ENCODE measurements at regions of chr12 and their contacts with region 1.

Region 1: GRCh38 chr12:88132390-88132789 is 9.5 kb downstream of the CEP290 start:
- H3K4me3 ChIP-seq: no peak overlapping the region
- H3K27ac ChIP-seq: no peak overlapping the region
- H3K4me1 ChIP-seq: no peaks in the 10 kb centered on the region
- CTCF ChIP-seq: no peak

Region 2: DNA sequence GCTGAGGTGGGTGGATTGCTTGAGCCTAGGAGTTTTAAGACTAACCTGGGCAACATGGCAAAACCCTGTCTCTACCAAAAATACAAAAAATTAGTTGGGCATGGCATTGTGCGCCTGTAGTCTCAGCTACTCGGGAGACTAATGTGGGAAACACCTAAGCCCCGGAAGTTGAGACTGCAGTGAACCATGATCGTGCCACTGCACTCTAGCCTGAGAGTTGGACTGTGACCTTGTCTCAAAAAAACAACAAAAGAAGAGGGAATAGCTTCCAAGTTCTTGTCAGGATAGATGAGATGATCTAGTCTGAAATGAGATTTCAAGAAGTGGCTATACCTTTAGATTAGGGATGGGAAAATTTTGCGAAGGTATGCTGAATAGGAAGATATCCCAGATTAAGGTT is 88.4 kb before region 1 on chr12:
- CTCF ChIA-PET with region 1: no interaction called
- POLR2A ChIA-PET with region 1: interaction called, 11 read pairs
- H3K4me3 ChIP-seq: no peak overlapping the region
- H3K27ac ChIP-seq: no peak overlapping the region
- H3K4me1 ChIP-seq: no peaks in the 10 kb centered on the region
- CTCF ChIP-seq: no peak

Region 3: DNA sequence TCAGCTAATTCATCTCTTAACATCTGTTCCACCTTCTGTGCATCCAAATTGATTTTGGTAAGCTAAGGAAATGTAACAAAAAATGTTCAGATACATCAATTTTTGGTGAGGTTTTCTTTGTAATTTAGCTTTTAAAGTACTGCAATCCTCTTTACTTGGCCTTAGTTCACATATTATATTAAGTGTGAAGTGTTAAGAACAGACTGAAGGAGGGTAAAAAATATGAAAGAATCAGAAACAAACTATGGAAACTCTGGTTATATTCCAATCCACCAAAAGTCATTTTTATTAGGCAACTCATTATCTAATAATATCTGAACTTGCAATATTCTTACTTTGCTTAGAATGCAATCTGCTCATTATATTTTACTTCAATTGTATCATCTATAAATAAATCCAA is 39.6 kb before region 1 on chr12:
- CTCF ChIA-PET with region 1: no interaction called
- POLR2A ChIA-PET with region 1: no interaction called
- H3K4me3 ChIP-seq: no peak overlapping the region
- H3K27ac ChIP-seq: no peak overlapping the region
- H3K4me1 ChIP-seq: no peaks in the 10 kb centered on the region
- CTCF ChIP-seq: no peak